Calu3 (cell line): ENCODE measurements at regions of chr15 and their contacts with region 1.

Region 1: GRCh38 chr15:80695104-80695910 is at the start of gene ABHD17C:
- DNase-seq: peak; percentile 84
- H3K4me3 Mint-ChIP-seq: peak within 1 kb of the TSS; percentile 91
- H3K27ac Mint-ChIP-seq: peak within 1 kb of the TSS; percentile 92
- H3K4me1 Mint-ChIP-seq: peaks cover 40% of the 10 kb centered on the region
- H3K27me3 Mint-ChIP-seq: no peaks in the 10 kb centered on the region
- CTCF ChIP-seq: no peak
- total RNA-seq, gene ABHD17C: 69.4 and 69.7 TPM in 2 replicates

Region 2: DNA sequence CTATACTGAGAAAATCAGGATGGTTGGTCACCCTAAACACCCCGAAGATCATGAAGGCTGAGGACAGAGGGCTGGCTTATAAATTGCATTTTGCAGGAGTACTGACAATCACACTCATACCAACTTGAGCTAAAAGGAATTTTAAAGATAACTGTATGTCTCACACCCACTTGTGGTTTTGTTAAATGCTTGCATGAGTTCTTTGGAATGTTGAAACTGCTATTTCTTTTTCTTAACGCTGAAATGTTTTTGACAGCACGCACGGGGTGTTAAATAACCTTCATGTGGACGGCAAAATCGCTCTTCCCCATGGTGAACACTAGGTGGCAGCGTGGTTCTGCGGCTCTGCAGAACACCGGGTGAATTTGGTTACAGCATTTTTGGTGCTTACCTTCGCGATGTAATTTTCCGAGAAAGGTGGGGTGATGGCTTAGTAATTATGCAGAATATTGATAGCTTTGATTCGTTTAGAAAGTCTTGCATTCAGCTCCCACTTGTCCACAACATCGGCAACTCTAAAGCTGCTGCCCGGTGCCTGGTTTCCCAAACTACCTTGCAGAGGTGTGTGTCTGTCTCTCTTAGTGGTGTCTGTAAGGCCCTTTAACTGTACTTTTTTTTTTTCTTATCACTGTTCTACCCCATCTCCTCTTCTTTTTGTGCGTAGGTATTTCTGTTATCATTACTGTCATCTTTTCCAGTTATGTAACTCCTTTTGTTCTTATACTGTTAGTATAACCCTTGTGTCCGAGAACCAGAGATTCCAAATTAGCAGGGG is 239.5 kb before region 1 on chr15:
- CTCF ChIA-PET with region 1: no interaction called
- intact Hi-C with region 1: loop called (anchors 5 kb)
- DNase-seq: peak; percentile 75
- H3K4me3 Mint-ChIP-seq: peak overlapping the region; percentile 24
- H3K27ac Mint-ChIP-seq: no peak overlapping the region
- H3K4me1 Mint-ChIP-seq: peaks cover 26% of the 10 kb centered on the region
- H3K27me3 Mint-ChIP-seq: peaks cover 9% of the 10 kb centered on the region
- CTCF ChIP-seq: peak; percentile 90

Region 3: DNA sequence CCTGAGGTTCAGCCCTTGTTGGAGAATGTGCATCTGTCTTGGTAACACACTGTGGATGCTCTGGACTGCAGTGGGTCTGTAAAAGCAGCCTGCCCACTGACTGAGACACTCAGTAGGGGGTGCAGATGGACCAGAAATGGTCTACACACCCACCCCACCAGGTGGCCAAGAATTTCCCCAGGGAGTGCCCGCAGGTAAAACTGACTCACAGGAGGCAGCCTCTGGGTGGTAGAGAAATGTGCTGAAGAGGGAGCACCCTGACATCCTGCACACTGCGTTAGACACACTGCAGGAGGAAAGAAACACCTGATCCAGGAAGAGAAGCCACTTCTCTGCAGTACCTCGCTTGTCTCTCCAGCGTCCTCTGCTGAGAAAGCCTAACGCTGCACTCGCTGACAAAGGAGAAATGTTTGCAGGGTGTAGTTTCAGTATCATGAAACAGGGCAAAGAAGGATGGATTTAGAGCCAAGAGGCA is 109.7 kb before region 1 on chr15:
- CTCF ChIA-PET with region 1: interaction called, 6 read pairs
- intact Hi-C with region 1: loop called (anchors 1 kb)
- DNase-seq: peak; percentile 77
- H3K4me3 Mint-ChIP-seq: no peak overlapping the region
- H3K27ac Mint-ChIP-seq: peak overlapping the region; percentile 65
- H3K4me1 Mint-ChIP-seq: peaks cover 57% of the 10 kb centered on the region
- H3K27me3 Mint-ChIP-seq: no peaks in the 10 kb centered on the region
- CTCF ChIP-seq: peak; percentile 50

Region 4: GRCh38 chr15:80674245-80674614 is 21.1 kb before region 1 on chr15:
- CTCF ChIA-PET with region 1: interaction called, 19 read pairs
- intact Hi-C with region 1: no loop called
- DNase-seq: peak; percentile 36
- H3K4me3 Mint-ChIP-seq: no peak overlapping the region
- H3K27ac Mint-ChIP-seq: peak overlapping the region; percentile 72
- H3K4me1 Mint-ChIP-seq: peaks cover 58% of the 10 kb centered on the region
- H3K27me3 Mint-ChIP-seq: no peaks in the 10 kb centered on the region
- CTCF ChIP-seq: no peak

Region 5: GRCh38 chr15:80743187-80743833 is 48.0 kb after region 1 on chr15:
- CTCF ChIA-PET with region 1: interaction called, 4 read pairs
- intact Hi-C with region 1: loop called (anchors 5 kb)
- DNase-seq: peak; percentile 43
- H3K4me3 Mint-ChIP-seq: peak overlapping the region; percentile 6
- H3K27ac Mint-ChIP-seq: peak overlapping the region; percentile 8
- H3K4me1 Mint-ChIP-seq: peaks cover 61% of the 10 kb centered on the region
- H3K27me3 Mint-ChIP-seq: no peaks in the 10 kb centered on the region
- CTCF ChIP-seq: no peak